Right lobe of liver (tissue), 6 donors: ENCODE measurements at regions of chr4 and their contacts with region 1.

Region 1: GRCh38 chr4:121736735-121737351 is 28.1 kb downstream of the SMIM43 start:
- DNase-seq: no peak
- ATAC-seq: peak; percentile 69 to 82 (median 74)
- H3K4me3 ChIP-seq: no peak overlapping the region
- H3K27ac ChIP-seq: no peak overlapping the region
- H3K4me1 ChIP-seq: no peaks in the 10 kb centered on the region
- H3K27me3 ChIP-seq: no peaks in the 10 kb centered on the region
- CTCF ChIP-seq: peak; percentile 48 to 62 (median 54)
- POLR2A ChIP-seq: no peak

Region 2: GRCh38 chr4:121462660-121463261 is 274.1 kb before region 1 on chr4:
- intact Hi-C with region 1: loop called in 1 of 2 experiments (anchors 10 kb)
- DNase-seq: no peak
- ATAC-seq: peak; percentile 61 to 79 (median 69)
- H3K4me3 ChIP-seq: no peak overlapping the region
- H3K27ac ChIP-seq: no peak overlapping the region
- H3K4me1 ChIP-seq: no peaks in the 10 kb centered on the region
- H3K27me3 ChIP-seq: no peaks in the 10 kb centered on the region
- CTCF ChIP-seq: peak; percentile 38 to 63 (median 55)
- POLR2A ChIP-seq: no peak